Left colon (tissue), 2 donors: ENCODE measurements at regions of chr3 and their contacts with region 1.

Region 1: DNA sequence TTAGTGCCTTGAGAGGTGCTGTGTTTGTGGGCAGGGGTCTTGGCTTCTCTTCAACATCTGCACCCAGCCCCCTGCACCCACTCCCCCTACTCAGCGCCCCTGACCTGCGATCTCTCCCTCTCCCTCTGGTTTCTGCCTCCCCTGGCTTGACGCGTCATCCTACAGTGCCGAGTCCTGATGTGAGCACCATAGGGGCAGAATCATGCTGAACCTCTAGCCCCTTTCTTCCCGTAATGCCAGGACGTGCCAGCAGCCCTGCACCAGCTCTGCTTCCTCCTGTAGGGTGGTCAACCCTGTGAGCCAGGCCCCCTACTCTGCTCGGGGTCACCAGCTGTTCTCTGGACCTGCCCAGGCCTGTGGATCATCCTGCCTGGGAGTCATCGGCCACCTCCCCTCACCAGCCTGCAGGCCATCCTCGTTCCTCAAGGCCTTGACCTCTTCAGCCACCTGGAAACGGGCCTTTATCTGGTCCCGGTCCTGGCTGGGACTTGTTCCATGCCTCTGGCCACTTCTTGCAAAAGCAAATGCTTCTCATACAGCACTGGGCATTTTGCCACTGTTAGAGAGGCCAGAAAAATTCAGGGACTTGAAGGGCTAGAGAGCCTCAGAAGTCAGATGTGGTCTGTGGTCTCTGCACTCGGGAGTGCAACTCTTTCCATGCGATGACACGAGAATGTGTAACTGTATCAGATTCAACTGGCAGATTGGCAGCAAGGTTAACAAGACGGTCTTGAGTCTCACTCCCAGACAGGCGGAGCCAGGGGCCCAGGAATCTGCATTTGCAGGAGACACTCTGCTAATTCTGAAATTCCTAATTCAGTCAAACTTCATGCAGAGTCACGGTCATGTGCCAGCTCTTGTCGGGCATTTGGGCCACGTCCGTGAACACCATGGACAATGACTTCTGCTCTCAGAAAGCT is 16.7 kb upstream of the KLF15 start:
- DNase-seq: peak in 1 of 2 donors; percentile 21
- ATAC-seq: no peak

Region 2: GRCh38 chr3:126267226-126267975 is 106.5 kb before region 1 on chr3:
- intact Hi-C with region 1: loop called in 1 of 2 experiments (anchors 10 kb)
- DNase-seq: peak; percentile 36 to 39
- ATAC-seq: peak; percentile 45